ENCODE measurements at regions of chr5 and their contacts with region 1.

Region 1: GRCh38 chr5:150449517-150450339 is at the start of gene RPS14:
- DNase-seq: peak; percentile 84
- H3K4me3 ChIP-seq: peak within 1 kb of the TSS; percentile 93
- CTCF ChIP-seq: peak; percentile 84

Region 2: DNA sequence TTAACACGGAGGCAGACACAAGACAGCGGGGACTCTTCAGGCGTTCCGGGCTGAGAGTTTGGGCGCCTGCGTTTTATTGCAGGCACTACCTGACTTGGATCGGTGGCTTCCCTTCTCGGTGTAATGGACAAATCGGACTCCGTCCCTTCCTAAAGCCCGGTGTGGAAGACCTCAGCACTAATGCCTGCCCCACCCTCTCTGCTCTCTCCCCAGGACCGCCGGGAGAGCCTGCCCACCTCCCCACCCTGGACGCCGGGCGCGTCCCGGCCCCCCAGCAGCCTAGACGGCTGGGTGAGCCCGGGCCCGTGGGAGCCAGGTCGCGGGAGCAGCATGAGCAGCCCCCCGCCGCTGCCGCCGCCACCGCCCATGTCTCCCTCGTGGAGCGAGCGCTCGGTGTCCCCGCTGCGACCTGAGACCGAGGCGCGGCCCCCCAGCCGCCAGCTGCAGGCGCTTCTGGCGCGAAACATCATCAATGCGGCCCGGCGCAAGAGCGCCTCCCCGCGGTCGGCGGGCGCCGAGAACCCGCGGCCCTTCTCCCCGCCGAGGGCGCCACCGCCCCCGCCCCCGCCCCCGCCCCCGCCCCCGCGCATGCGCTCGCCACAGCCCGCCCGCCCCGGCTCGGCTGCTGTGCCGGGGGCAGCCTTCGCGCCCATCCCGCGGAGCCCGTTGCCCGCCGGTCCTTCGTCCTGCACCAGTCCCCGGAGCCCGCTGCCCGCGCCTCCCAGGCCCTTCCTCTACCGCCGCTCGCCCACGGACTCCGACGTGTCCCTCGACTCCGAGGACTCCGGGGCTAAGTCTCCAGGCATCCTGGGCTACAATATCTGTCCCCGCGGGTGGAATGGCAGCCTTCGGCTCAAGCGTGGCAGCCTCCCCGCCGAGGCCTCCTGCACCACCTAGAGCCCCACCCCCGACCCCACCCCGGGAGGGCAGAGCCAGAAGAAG is 206.7 kb after region 1 on chr5:
- in situ Hi-C with region 1: loop called (anchors 25 kb)
- DNase-seq: no peak
- H3K4me3 ChIP-seq: peak overlapping the region; percentile 45
- CTCF ChIP-seq: peak; percentile 55

Measured in astrocyte of the cerebellum (primary cell).